MCF 10A (cell line): ENCODE measurements at regions of chr3 and their contacts with region 1.

Region 1: DNA sequence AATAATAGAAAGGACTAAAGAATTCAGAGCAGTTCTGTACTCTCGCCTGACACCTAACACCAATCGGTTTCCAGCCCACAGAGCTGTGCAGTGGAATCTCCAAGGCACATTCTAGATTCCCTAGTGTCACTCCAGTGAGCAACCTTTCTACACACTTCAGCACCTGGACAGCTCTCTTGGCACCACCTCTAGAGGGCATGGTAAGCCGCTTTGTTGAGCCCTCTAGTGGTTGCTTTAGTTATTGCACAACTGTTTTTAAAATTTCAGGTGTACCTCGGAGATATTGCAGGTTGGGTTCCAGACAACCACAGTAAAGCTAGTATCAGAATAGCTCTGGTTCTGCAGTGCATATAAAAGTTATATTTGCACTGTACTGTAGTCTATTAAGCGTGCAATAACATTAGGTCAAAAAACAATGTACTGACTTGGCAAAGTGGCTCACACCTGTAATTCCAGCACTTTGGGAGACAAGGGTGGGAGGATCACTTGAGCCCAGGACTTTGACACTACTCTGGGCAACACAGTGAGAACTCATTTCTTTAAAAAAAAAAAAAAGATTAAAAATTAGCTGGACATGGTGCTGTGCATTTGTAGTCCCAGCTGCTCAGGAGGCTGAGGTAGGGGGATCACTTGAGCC is 26.5 kb upstream of the ERC2 start:
- DNase-seq: peak; percentile 92
- H3K4me3 Mint-ChIP-seq: no peak overlapping the region
- H3K27ac Mint-ChIP-seq: no peak overlapping the region
- H3K4me1 Mint-ChIP-seq: no peaks in the 10 kb centered on the region
- H3K27me3 Mint-ChIP-seq: peaks cover 70% of the 10 kb centered on the region
- CTCF ChIP-seq: peak; percentile 90

Region 2: DNA sequence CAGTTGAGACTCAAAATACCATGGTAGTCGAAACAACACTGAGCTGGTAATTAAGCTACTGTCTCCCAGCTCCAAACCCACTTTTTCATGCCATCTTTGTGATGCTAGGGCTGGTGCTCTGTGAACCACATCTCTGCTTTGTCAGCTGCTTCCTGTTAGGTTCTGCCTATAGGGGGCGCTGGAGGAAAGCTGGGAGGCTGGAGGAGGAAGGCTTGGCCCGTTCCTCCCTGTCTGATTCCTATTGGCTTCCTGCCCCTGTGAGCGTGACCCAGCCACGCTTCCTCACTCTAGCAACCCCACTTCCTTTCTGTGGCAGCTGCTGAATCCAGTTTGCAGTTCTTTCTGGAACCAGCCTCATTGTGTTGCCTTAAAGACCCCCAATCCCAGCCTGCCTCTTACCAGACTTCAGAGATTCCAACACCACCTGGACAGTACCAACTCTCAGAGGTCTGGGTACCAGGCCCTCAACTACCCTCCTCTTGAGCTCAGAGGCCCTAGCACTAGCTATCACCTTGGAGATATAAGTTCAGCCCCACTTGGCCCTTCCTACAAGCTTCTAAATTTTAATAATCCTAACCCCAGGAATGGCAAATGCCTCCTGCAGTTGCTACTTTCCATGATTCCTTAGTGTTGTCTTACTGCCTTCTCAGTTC is 147.5 kb before region 1 on chr3:
- CTCF ChIA-PET with region 1: interaction called, 104 read pairs
- POLR2A ChIA-PET with region 1: no interaction called
- intact Hi-C with region 1: no loop called
- DNase-seq: peak; percentile 63
- H3K4me3 Mint-ChIP-seq: no peak overlapping the region
- H3K27ac Mint-ChIP-seq: no peak overlapping the region
- H3K4me1 Mint-ChIP-seq: peaks cover 6% of the 10 kb centered on the region
- H3K27me3 Mint-ChIP-seq: peaks cover 37% of the 10 kb centered on the region
- CTCF ChIP-seq: no peak

Region 3: DNA sequence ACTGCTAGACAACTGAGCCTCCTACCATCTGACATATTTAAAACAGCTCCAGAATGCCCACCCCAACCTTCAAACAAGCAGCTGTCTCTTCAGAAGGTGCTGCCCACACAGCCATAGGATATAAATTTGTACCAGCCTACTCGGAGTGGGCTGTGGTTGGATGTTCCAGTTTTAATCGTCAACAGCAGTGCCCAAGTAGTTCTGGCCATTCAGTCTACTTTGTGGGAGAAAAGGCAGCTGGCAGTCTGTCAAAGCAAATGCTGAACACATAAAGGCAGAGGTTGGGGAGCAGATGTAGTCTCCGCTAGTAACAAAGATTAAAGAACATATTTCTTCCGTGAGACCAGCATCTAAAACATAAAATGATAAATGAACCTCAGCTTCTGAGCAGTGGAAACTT is 10.7 kb before region 1 on chr3:
- CTCF ChIA-PET with region 1: interaction called, 13 read pairs
- POLR2A ChIA-PET with region 1: interaction called, 3 read pairs
- intact Hi-C with region 1: no loop called
- DNase-seq: no peak
- H3K4me3 Mint-ChIP-seq: no peak overlapping the region
- H3K27ac Mint-ChIP-seq: no peak overlapping the region
- H3K4me1 Mint-ChIP-seq: no peaks in the 10 kb centered on the region
- H3K27me3 Mint-ChIP-seq: peaks cover 67% of the 10 kb centered on the region
- CTCF ChIP-seq: no peak

Region 4: GRCh38 chr3:57007513-57008460 is 513.0 kb after region 1 on chr3:
- CTCF ChIA-PET with region 1: no interaction called
- POLR2A ChIA-PET with region 1: no interaction called
- intact Hi-C with region 1: no loop called
- DNase-seq: peak; percentile 88
- H3K4me3 Mint-ChIP-seq: peak overlapping the region; percentile 46
- H3K27ac Mint-ChIP-seq: peak overlapping the region; percentile 88
- H3K4me1 Mint-ChIP-seq: peaks cover 19% of the 10 kb centered on the region
- H3K27me3 Mint-ChIP-seq: no peaks in the 10 kb centered on the region
- CTCF ChIP-seq: no peak